RWPE1 (cell line): ENCODE measurements at regions of chr14 and their contacts with region 1.

Region 1: GRCh38 chr14:96275177-96276112 is 19.4 kb downstream of the BDKRB1 start:
- DNase-seq: peak; percentile 71
- H3K27ac ChIP-seq: no peak overlapping the region; the same call in 1 of the 2 replicates
- CTCF ChIP-seq: peak; percentile 97

Region 2: GRCh38 chr14:96100161-96101029 is 175.1 kb before region 1 on chr14:
- CTCF ChIA-PET with region 1: interaction called, 19 read pairs
- POLR2A ChIA-PET with region 1: interaction called, 3 read pairs
- DNase-seq: peak; percentile 74
- H3K27ac ChIP-seq: no peak overlapping the region
- CTCF ChIP-seq: peak; percentile 84

Region 3: GRCh38 chr14:96255501-96256366 is 19.7 kb before region 1 on chr14 and contains the start of gene BDKRB1:
- CTCF ChIA-PET with region 1: interaction called, 10 read pairs
- POLR2A ChIA-PET with region 1: no interaction called
- DNase-seq: peak; percentile 67
- H3K27ac ChIP-seq: peak within 1 kb of the TSS; percentile 96
- CTCF ChIP-seq: no peak